ENCODE measurements at regions of chr11 and their contacts with region 1.

Region 1: DNA sequence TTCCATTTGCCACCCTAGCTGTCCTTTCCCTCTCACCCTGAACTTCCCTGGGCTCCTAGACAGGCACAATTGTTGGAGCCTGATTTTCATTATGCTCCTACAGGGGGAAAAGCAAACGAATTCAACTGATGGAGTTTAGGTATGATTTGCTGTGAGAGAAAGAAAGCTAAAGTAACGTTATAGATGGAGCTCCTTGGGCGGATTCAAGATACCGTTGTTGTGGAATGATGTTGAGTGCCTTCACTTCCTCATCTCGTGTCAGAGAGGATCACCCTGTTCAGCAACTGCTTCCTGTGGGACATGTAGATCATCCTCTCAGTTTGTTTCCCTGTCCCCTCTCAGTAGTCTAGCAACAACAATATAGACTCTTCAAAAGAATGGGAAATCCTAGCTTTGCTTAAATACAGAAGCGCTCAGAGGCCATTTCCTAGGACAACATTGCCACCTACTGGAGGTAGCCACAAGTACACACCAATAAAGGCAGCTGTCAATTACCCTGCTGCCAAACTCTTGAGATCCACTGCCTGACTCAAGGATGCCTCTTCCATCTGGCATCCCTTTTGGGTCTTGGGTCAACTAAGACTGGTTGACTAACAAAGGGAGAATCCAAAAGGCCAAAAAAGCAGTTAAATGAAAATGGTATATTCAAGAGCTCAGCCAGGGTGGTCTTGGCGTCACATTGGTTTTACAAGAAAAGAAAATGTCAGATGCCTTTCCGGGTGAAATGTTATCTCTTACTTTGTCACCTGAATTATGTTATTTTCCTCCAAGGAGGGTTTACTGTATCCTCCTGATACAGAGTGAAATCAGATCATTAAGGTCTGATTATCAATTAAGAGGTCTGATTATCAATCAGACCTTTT is 13.5 kb upstream of the DTX4 start:
- DNase-seq: peak; percentile 68
- H3K4me3 Mint-ChIP-seq: no peak overlapping the region
- H3K27ac Mint-ChIP-seq: no peak overlapping the region
- H3K4me1 Mint-ChIP-seq: peaks cover 4% of the 10 kb centered on the region
- H3K27me3 Mint-ChIP-seq: peaks cover 13% of the 10 kb centered on the region

Region 2: GRCh38 chr11:58958500-58958899 is 199.9 kb before region 1 on chr11:
- CTCF ChIA-PET with region 1: interaction called, 12 read pairs
- POLR2A ChIA-PET with region 1: no interaction called
- intact Hi-C with region 1: loop called (anchors 2 kb)
- DNase-seq: peak; percentile 53
- H3K4me3 Mint-ChIP-seq: no peak overlapping the region
- H3K27ac Mint-ChIP-seq: no peak overlapping the region
- H3K4me1 Mint-ChIP-seq: peaks cover 3% of the 10 kb centered on the region
- H3K27me3 Mint-ChIP-seq: peaks cover 6% of the 10 kb centered on the region

Region 3: GRCh38 chr11:59053387-59053786 is 105.0 kb before region 1 on chr11:
- CTCF ChIA-PET with region 1: interaction called, 37 read pairs
- POLR2A ChIA-PET with region 1: no interaction called
- intact Hi-C with region 1: loop called (anchors 1 kb)
- DNase-seq: peak; percentile 86
- H3K4me3 Mint-ChIP-seq: no peak overlapping the region
- H3K27ac Mint-ChIP-seq: no peak overlapping the region
- H3K4me1 Mint-ChIP-seq: peaks cover 4% of the 10 kb centered on the region
- H3K27me3 Mint-ChIP-seq: peaks cover 17% of the 10 kb centered on the region

Region 4: GRCh38 chr11:59097113-59097708 is 61.2 kb before region 1 on chr11:
- CTCF ChIA-PET with region 1: interaction called, 52 read pairs
- POLR2A ChIA-PET with region 1: no interaction called
- intact Hi-C with region 1: loop called (anchors 1 kb)
- DNase-seq: peak; percentile 74
- H3K4me3 Mint-ChIP-seq: no peak overlapping the region
- H3K27ac Mint-ChIP-seq: peak overlapping the region; percentile 31
- H3K4me1 Mint-ChIP-seq: peaks cover 9% of the 10 kb centered on the region
- H3K27me3 Mint-ChIP-seq: peaks cover 17% of the 10 kb centered on the region

Region 5: DNA sequence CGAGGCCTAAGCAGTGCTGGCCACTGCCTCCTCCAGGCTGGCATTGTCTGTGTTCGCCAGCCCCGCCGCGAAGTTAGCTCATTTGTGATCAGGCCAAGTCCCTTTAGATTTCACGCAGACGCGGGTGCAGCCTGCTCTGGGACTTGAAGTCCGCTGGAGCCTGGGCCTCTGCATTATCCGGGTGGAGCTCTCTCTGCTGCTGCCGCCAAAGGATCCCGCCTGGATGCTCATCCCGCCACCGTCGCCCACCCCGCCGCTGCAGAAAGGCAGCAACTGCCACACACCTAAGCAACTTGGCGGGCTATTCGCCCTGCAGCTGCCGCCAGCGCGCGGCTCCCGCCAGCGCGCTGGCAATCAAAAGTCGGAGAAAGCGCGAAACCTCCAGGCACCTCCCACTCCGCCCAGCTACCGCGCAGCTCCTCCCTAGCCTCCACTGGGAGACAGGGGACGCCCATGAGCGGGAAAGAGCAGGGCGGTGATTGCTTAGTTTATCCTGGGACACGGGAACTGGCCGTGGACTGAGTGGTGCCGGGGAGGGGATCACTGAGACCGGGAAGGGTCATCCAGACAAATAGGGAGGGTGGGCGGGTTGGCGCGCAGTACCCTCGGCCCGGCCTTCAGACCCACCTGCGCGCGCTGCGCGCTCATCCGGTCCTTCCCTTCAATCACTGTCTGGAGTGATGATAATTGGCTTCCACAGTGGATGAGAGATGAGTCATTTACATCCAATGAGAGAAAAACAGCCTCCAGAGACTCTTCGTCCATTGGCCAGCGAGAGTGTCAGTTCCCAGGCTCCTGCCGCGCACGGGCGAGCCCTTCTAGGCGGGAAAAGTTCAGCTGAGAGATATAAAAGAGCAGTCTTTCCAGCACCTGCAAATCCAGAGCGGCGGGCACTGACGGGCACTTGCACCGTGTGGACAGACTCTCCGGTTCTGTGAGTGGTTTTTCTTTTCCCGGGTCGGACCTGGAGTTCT is 51.8 kb before region 1 on chr11 and contains the start of gene FAM111B:
- CTCF ChIA-PET with region 1: interaction called, 12 read pairs
- POLR2A ChIA-PET with region 1: no interaction called
- intact Hi-C with region 1: loop called (anchors 2 kb)
- DNase-seq: peak; percentile 86
- H3K4me3 Mint-ChIP-seq: peak within 1 kb of the TSS; percentile 84
- H3K27ac Mint-ChIP-seq: peak within 1 kb of the TSS; percentile 72
- H3K4me1 Mint-ChIP-seq: peaks cover 42% of the 10 kb centered on the region
- H3K27me3 Mint-ChIP-seq: peaks cover 3% of the 10 kb centered on the region
- total RNA-seq, gene FAM111B: 28.9 to 31.0 TPM

Region 6: GRCh38 chr11:59142530-59143507 is 15.6 kb before region 1 on chr11 and contains the start of gene FAM111A:
- CTCF ChIA-PET with region 1: interaction called, 148 read pairs
- POLR2A ChIA-PET with region 1: interaction called, 9 read pairs
- intact Hi-C with region 1: loop called (anchors 1 kb)
- DNase-seq: peak; percentile 90
- H3K4me3 Mint-ChIP-seq: peak within 1 kb of the TSS; percentile 94
- H3K27ac Mint-ChIP-seq: peak within 1 kb of the TSS; percentile 93
- H3K4me1 Mint-ChIP-seq: peaks cover 50% of the 10 kb centered on the region
- H3K27me3 Mint-ChIP-seq: no peaks in the 10 kb centered on the region
- total RNA-seq, gene FAM111A: 87.6 to 87.8 TPM

Measured in activated CD4-positive, alpha-beta memory T cell treated with anti-CD3 and anti-CD28 coated beads for 36 hours (primary cell).